ENCODE measurements at regions of chr14 and their contacts with region 1.

Region 1: GRCh38 chr14:99793213-99794150 is at the start of gene EML1:
- DNase-seq: peak; percentile 87 to 93
- ATAC-seq: peak; percentile 87 to 95 (median 90)
- H3K4me3 ChIP-seq: peak within 1 kb of the TSS; percentile 69
- H3K27ac ChIP-seq: peak within 1 kb of the TSS; percentile 77
- H3K4me1 ChIP-seq: peaks cover 14% of the 10 kb centered on the region
- H3K27me3 ChIP-seq: no peaks in the 10 kb centered on the region
- CTCF ChIP-seq: peak; percentile 28
- total RNA-seq, gene EML1: 6.9 to 40.4 (median 11.5) TPM

Region 2: GRCh38 chr14:99683619-99684355 is 109.7 kb before region 1 on chr14 and contains the start of gene CYP46A1:
- intact Hi-C with region 1: loop called in 1 of 2 experiments (anchors 5 kb)
- DNase-seq: peak; percentile 100
- ATAC-seq: peak; percentile 96 to 98 (median 98)
- H3K4me3 ChIP-seq: peak within 1 kb of the TSS; percentile 95
- H3K27ac ChIP-seq: peak within 1 kb of the TSS; percentile 83
- H3K4me1 ChIP-seq: no peaks in the 10 kb centered on the region
- H3K27me3 ChIP-seq: no peaks in the 10 kb centered on the region
- CTCF ChIP-seq: no peak
- total RNA-seq, gene CYP46A1: 0.50 to 1.5 (median 0.83) TPM

Region 3: GRCh38 chr14:99737956-99738667 is 55.4 kb before region 1 on chr14:
- intact Hi-C with region 1: loop called (anchors 2 to 5 kb)
- DNase-seq: no peak
- ATAC-seq: peak; percentile 17 to 36 (median 22)
- H3K4me3 ChIP-seq: peak overlapping the region; percentile 71
- H3K27ac ChIP-seq: peak overlapping the region; percentile 73
- H3K4me1 ChIP-seq: peaks cover 67% of the 10 kb centered on the region
- H3K27me3 ChIP-seq: no peaks in the 10 kb centered on the region
- CTCF ChIP-seq: no peak

Region 4: DNA sequence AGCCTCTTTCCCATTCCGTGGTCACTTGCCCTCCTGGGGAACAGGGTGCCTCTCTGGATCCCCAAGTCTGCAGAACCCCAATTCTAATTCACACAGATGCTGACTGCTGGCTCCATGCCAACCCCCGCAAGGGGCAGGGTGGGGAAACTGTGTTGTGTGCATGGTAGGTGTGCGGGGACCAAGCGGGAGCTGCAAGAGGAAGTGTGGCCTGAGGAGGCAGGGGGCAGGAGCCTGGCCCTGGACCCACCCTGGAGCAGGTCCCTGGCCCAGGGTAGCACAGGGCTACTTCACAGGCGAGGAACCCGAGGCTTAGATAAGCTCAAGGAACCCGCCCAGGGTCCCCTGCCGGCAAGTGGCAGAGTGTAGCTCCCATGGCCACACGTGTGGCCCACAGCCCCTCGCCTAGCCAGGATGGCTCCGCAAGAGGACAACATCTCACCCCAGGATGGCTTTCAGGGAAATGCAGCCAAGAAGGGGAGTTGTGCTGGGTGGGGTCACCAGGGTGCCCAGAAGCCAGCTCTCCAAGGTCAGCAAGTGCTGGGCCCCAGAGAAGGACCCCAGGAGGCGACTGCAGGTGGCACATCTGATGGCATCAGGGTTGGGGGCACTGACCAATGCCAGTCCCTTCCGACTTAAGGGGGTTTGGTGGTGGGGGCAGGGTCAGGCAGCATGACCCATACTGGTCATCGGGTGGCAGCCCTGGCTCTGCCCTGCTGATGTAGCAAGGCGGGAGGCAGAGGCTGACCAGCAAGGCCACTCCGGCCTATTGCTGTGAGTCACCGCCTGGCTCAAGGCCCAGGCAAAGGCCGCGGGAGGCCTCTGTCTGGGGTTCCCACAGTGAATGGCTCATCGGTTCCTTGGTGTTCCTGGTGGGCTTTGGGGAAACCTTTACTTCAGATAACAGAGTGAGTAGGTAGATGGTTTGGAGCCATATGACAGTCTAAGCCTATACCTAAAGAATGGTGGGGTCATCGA is 37.6 kb before region 1 on chr14:
- intact Hi-C with region 1: loop called in 1 of 2 experiments (anchors 5 kb)
- DNase-seq: peak; percentile 93
- ATAC-seq: peak; percentile 91 to 96 (median 94)
- H3K4me3 ChIP-seq: no peak overlapping the region
- H3K27ac ChIP-seq: no peak overlapping the region
- H3K4me1 ChIP-seq: peaks cover 37% of the 10 kb centered on the region
- H3K27me3 ChIP-seq: no peaks in the 10 kb centered on the region
- CTCF ChIP-seq: no peak

Region 5: GRCh38 chr14:100132161-100132902 is 338.9 kb after region 1 on chr14:
- intact Hi-C with region 1: no loop called
- DNase-seq: peak; percentile 69 to 71
- ATAC-seq: peak in 3 of 4 donors; percentile 17 to 26 (median 18)
- H3K4me3 ChIP-seq: no peak overlapping the region
- H3K27ac ChIP-seq: no peak overlapping the region
- H3K4me1 ChIP-seq: no peaks in the 10 kb centered on the region
- H3K27me3 ChIP-seq: no peaks in the 10 kb centered on the region
- CTCF ChIP-seq: no peak